ENCODE measurements at regions of chr10 and their contacts with region 1.

Region 1: DNA sequence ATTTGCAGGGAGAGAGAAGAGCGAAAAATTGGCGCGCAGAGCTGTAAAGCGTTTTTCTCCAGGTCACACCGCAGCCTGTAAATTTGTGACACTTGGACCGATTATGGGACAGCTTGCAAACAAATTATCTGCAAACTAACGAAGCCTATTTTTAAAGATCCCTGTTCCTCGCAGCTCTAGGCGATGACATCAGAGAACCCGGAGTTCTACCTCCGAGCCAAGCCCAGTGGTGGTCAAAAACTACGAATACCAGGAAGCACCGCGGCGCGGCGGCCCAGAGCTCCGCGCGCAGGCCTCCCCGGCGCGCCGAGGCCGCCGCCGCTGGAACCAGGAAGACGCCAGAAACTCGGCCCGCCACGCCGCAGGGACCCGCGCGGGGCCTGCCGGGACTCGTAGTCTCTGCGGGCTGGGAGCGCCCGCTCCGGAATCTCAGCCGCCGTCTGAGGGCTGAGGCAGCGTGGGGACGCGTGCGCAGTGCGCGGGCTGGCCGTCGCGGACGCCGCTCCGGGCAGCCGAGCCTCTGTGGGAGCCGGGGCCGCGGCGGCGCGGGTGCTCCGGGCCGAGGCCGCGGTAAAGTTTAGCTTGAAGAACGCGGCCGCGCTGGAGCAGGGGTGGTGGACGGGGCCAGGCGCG is at the start of gene PLEKHA1:
- DNase-seq: peak; percentile 95
- ATAC-seq: peak; percentile 85
- H3K4me3 ChIP-seq: peak within 1 kb of the TSS; percentile 45 to 84 (median 76)
- H3K4me3 Mint-ChIP-seq: peak within 1 kb of the TSS; percentile 92
- H3K27ac ChIP-seq: peak within 1 kb of the TSS; percentile 88 to 97
- H3K27ac Mint-ChIP-seq: peak within 1 kb of the TSS; percentile 98
- H3K4me1 ChIP-seq: peaks cover 13 to 17% of the 10 kb centered on the region in 2 donors
- H3K4me1 Mint-ChIP-seq: peaks cover 28% of the 10 kb centered on the region
- H3K27me3 ChIP-seq: peaks cover 0 to 31% (median 20%) of the 10 kb centered on the region in 4 experiments
- H3K27me3 Mint-ChIP-seq: peaks cover 26% of the 10 kb centered on the region
- CTCF ChIP-seq: no peak
- total RNA-seq, gene PLEKHA1: 28.5 and 34.0 TPM in 2 replicates

Region 2: GRCh38 chr10:121927841-121928527 is 446.4 kb before region 1 on chr10 and contains the start of gene ATE1:
- CTCF ChIA-PET with region 1: no interaction called
- POLR2A ChIA-PET with region 1: no interaction called
- intact Hi-C with region 1: loop called (anchors 2 kb)
- DNase-seq: peak; percentile 89
- ATAC-seq: peak; percentile 93
- H3K4me3 ChIP-seq: peak within 1 kb of the TSS; percentile 71 to 99 (median 82)
- H3K4me3 Mint-ChIP-seq: peak within 1 kb of the TSS; percentile 96
- H3K27ac ChIP-seq: peak within 1 kb of the TSS; percentile 96 to 97
- H3K27ac Mint-ChIP-seq: peak within 1 kb of the TSS; percentile 94
- H3K4me1 ChIP-seq: peaks cover 10 to 16% of the 10 kb centered on the region in 2 donors
- H3K4me1 Mint-ChIP-seq: peaks cover 19% of the 10 kb centered on the region
- H3K27me3 ChIP-seq: no peaks in the 10 kb centered on the region
- H3K27me3 Mint-ChIP-seq: no peaks in the 10 kb centered on the region
- CTCF ChIP-seq: no peak
- total RNA-seq, gene ATE1: 32.0 and 40.3 TPM in 2 replicates

Region 3: GRCh38 chr10:122342293-122343134 is 31.8 kb before region 1 on chr10:
- CTCF ChIA-PET with region 1: interaction called, 11 read pairs
- POLR2A ChIA-PET with region 1: interaction called, 10 read pairs
- intact Hi-C with region 1: no loop called
- DNase-seq: peak; percentile 65
- ATAC-seq: peak; percentile 47
- H3K4me3 ChIP-seq: no peak overlapping the region
- H3K4me3 Mint-ChIP-seq: no peak overlapping the region
- H3K27ac ChIP-seq: no peak overlapping the region
- H3K27ac Mint-ChIP-seq: no peak overlapping the region
- H3K4me1 ChIP-seq: peaks cover 8 to 9% of the 10 kb centered on the region in 2 donors
- H3K4me1 Mint-ChIP-seq: peaks cover 11% of the 10 kb centered on the region
- H3K27me3 ChIP-seq: peaks cover 0 to 3% (median 1%) of the 10 kb centered on the region in 4 experiments
- H3K27me3 Mint-ChIP-seq: peaks cover 20% of the 10 kb centered on the region
- CTCF ChIP-seq: peak; percentile 82

Region 4: DNA sequence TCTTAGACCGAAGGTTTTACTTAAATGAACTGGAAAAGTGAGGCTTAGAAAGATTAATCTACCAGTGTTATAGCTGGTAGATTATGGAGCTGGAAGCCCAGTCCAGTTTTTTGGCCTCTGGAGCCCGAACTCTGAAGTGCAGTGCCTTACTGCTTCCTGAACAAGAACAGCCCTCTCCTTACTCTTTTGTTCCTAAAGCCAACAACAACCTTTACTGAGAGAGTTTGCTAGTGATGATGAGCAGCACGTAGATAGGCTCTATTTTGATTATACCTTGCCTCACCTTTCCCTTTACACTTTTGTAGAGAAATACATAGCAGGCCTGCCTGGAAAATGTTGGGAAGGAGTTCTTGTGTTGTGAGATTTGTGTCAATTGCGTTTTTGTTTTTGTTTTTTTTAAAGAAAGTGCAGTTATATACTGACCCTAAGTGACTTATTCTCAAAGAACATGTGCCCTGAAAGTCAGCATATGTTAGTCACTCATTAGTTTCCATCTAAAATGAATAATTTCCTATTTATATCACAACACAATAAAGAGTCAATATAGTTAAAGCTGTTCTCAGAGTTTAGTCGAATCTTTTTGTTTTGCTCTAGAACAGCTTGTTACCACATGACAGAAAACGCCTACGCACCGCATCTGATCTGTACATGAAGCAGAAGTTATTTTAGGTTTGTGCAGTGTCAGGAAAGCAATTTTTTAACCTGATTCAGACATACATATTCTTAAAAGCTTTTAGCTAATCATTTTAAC is 33.2 kb after region 1 on chr10:
- CTCF ChIA-PET with region 1: no interaction called
- POLR2A ChIA-PET with region 1: no interaction called
- intact Hi-C with region 1: no loop called
- DNase-seq: peak; percentile 14
- ATAC-seq: no peak
- H3K4me3 ChIP-seq: no peak overlapping the region
- H3K4me3 Mint-ChIP-seq: no peak overlapping the region
- H3K27ac ChIP-seq: no peak overlapping the region
- H3K27ac Mint-ChIP-seq: no peak overlapping the region
- H3K4me1 ChIP-seq: no peaks in the 10 kb centered on the region
- H3K4me1 Mint-ChIP-seq: peaks cover 16% of the 10 kb centered on the region
- H3K27me3 ChIP-seq: no peaks in the 10 kb centered on the region
- H3K27me3 Mint-ChIP-seq: no peaks in the 10 kb centered on the region
- CTCF ChIP-seq: no peak

Region 5: DNA sequence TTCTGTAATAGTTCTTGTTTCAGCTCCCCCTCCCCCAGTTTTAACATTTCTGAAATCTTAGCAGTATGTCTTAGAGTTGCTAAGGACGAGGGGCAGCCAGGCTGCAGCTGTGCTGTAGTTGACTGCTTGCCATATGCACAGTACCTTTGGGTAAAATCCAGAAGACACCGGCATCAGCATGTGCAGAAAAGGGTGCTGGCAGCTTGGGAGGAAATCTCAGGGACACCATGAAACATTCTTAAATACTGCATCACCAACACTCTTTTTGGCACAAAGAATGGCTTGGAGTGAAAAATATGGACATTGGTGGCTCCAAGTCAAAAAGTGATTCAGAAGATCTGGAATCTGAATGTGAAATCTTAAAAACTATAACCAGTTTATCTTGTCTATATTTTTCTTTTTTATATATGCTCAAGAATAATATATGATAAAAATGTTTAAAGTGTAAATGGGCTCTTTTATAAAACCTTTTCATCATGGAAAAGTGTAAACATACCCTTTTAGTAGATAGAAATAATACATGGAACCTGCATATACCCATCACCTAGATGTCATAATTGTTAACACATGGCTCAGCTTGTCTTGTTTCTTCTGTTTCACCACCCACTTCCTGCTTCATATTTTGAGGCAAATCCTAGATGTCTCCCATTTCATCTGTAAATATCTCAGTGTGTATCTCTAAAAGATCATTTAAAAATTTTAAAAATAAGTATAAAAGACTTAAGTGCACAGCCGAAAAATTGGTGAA is 45.7 kb after region 1 on chr10:
- CTCF ChIA-PET with region 1: interaction called, 3 read pairs
- POLR2A ChIA-PET with region 1: no interaction called
- intact Hi-C with region 1: loop called (anchors 5 kb)
- DNase-seq: no peak
- ATAC-seq: no peak
- H3K4me3 ChIP-seq: no peak overlapping the region
- H3K4me3 Mint-ChIP-seq: no peak overlapping the region
- H3K27ac ChIP-seq: peak overlapping the region; percentile 7 to 42
- H3K27ac Mint-ChIP-seq: no peak overlapping the region
- H3K4me1 ChIP-seq: peaks cover 34 to 73% of the 10 kb centered on the region in 2 donors
- H3K4me1 Mint-ChIP-seq: peaks cover 72% of the 10 kb centered on the region
- H3K27me3 ChIP-seq: no peaks in the 10 kb centered on the region
- H3K27me3 Mint-ChIP-seq: no peaks in the 10 kb centered on the region
- CTCF ChIP-seq: no peak

Region 6: DNA sequence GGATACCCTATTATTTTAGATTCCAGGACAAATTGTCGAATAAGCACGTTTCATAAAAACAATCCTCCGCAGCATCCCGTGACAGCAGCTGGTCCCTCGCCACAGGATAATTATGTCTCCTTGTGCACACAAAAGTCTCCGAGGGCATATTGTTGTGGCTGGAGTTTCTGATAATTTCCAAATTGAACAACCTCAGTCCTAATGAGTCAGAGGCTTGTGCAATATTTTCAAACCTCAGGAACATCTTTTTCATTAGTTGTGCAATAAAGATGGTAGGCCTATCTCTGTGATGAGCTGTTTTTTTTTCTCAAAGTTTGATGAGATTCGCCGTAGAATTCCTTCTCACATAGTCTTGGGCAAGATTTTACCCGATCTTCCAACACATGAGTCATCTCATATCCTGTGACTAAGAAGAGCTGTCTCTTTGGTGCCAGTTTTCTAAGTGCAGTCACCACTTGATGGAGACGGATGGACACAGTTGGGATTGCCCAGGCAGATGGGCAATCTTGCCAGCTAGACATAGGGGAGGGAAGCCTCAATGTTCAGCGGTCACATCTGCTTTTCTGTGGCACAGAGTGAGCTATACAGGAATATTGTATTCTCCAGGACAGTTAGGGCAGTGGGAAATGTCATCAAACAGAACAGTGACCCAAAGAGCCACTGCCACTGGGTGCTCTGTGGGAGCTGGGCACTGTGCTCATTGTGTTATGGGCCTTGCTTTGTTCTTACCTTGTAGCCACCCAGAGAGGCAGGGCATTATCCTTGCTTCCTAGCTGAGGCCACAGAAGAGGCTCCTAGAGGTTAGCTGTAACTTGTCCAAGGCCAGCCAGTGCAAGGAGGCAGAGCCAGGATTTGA is 94.8 kb after region 1 on chr10:
- CTCF ChIA-PET with region 1: no interaction called
- POLR2A ChIA-PET with region 1: no interaction called
- intact Hi-C with region 1: no loop called
- DNase-seq: no peak
- ATAC-seq: no peak
- H3K4me3 ChIP-seq: no peak overlapping the region
- H3K4me3 Mint-ChIP-seq: no peak overlapping the region
- H3K27ac ChIP-seq: no peak overlapping the region
- H3K27ac Mint-ChIP-seq: no peak overlapping the region
- H3K4me1 ChIP-seq: no peaks in the 10 kb centered on the region
- H3K4me1 Mint-ChIP-seq: no peaks in the 10 kb centered on the region
- H3K27me3 ChIP-seq: peaks cover 0 to 10% (median 1%) of the 10 kb centered on the region in 4 experiments
- H3K27me3 Mint-ChIP-seq: peaks cover 36% of the 10 kb centered on the region
- CTCF ChIP-seq: no peak

Region 7: DNA sequence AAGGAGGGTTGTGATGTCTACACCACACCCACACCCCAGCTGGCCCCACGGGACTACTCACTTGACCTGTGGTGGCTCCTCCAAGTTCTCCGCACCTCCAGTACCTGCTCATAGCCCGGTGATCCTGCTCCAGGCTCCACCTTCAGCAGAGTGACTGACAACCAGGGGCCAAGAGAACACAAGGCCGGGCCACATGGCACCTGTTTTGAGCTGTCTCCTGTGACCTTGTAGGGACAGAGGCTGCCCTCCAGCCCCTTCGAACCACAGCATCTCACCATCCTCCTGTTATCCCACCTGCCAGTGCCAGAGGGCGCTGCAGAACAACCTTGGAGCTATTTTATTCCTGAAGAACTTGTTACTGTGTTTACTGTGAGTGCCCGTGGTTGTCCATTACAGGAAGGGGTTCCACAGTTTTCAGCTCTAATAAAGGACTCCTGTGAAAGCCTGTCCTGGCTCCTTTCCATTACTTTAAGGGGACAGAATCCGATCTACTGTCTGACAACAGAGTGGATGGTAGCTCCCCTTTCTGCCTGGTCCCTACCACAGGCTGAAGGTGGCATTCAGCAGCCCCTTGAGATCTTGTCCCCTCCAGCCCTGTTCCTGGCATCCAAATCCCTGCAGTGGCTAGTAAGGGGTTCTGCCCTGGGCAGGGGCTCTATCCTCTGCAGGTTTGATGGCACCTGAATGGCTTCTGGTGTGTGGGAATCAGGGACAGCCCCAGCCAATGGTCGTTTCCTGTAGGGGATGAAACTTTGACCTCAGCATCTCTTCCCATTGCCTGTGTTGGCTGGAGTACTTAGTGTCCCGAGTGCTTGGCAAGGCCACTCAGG is 274.5 kb after region 1 on chr10:
- CTCF ChIA-PET with region 1: no interaction called
- POLR2A ChIA-PET with region 1: no interaction called
- intact Hi-C with region 1: no loop called
- DNase-seq: peak; percentile 8
- ATAC-seq: no peak
- H3K4me3 ChIP-seq: no peak overlapping the region
- H3K4me3 Mint-ChIP-seq: no peak overlapping the region
- H3K27ac ChIP-seq: no peak overlapping the region
- H3K27ac Mint-ChIP-seq: no peak overlapping the region
- H3K4me1 ChIP-seq: no peaks in the 10 kb centered on the region
- H3K4me1 Mint-ChIP-seq: no peaks in the 10 kb centered on the region
- H3K27me3 ChIP-seq: no peaks in the 10 kb centered on the region
- H3K27me3 Mint-ChIP-seq: peaks cover 19% of the 10 kb centered on the region
- CTCF ChIP-seq: peak; percentile 33

Region 8: GRCh38 chr10:122879339-122880273 is 505.3 kb after region 1 on chr10 and contains the start of gene FAM24B:
- CTCF ChIA-PET with region 1: no interaction called
- POLR2A ChIA-PET with region 1: no interaction called
- intact Hi-C with region 1: loop called (anchors 1 kb)
- DNase-seq: peak; percentile 96
- ATAC-seq: peak; percentile 84
- H3K4me3 ChIP-seq: peak within 1 kb of the TSS; percentile 49 to 83 (median 64)
- H3K4me3 Mint-ChIP-seq: peak within 1 kb of the TSS; percentile 86
- H3K27ac ChIP-seq: peak within 1 kb of the TSS; percentile 62 to 86
- H3K27ac Mint-ChIP-seq: peak within 1 kb of the TSS; percentile 92
- H3K4me1 ChIP-seq: peaks cover 12 to 17% of the 10 kb centered on the region in 2 donors
- H3K4me1 Mint-ChIP-seq: peaks cover 39% of the 10 kb centered on the region
- H3K27me3 ChIP-seq: no peaks in the 10 kb centered on the region
- H3K27me3 Mint-ChIP-seq: no peaks in the 10 kb centered on the region
- CTCF ChIP-seq: no peak
- total RNA-seq, gene FAM24B: 11.7 and 12.5 TPM in 2 replicates

Region 9: DNA sequence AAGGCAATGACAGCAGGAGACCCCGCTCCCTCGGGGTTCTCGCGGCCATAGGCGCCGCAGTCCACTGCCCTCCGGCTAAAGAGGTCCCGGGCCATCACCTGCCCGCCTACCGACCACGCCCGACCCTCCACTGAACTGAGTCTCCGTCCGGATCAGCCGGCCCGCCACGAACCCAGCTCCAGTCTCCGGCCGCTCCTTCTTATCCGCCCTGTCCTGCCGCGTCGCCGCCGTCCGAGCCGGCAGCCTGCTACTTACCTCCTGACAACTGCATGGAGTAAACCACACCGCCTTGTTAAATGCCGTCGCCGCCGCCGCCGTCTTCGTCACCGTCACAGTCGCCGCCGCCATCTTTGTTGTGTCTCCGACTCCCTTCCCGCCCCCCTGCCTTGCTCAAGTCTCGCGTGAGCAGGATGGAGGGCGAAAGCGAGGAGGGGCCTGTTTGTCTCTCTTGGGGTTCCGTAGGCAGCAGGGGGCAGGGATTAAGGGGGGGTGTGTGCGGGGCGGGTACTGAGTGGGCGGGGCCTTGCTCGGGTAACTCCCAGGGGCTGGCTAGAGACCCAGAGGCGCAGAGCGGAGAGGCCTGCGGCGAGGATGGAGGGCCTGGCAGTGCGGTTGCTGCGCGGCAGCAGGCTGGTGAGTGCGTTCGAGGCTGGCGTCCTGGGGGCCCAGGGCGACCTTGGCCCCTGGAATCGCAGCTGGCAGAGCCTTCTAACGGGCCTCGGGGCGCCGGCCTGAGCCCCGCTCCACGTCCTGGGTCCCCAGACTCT is 634.3 kb after region 1 on chr10 and contains the starts of genes ACADSB and IKZF5:
- CTCF ChIA-PET with region 1: no interaction called
- POLR2A ChIA-PET with region 1: no interaction called
- intact Hi-C with region 1: loop called (anchors 1 kb)
- DNase-seq: peak; percentile 97
- ATAC-seq: peak; percentile 93
- H3K4me3 ChIP-seq: peak within 1 kb of the TSS; percentile 63 to 100 (median 95)
- H3K4me3 Mint-ChIP-seq: peak within 1 kb of the TSS; percentile 98
- H3K27ac ChIP-seq: peak within 1 kb of the TSS; percentile 92 to 98
- H3K27ac Mint-ChIP-seq: peak within 1 kb of the TSS; percentile 98
- H3K4me1 ChIP-seq: peaks cover 22 to 25% of the 10 kb centered on the region in 2 donors
- H3K4me1 Mint-ChIP-seq: peaks cover 48% of the 10 kb centered on the region
- H3K27me3 ChIP-seq: no peaks in the 10 kb centered on the region
- H3K27me3 Mint-ChIP-seq: no peaks in the 10 kb centered on the region
- CTCF ChIP-seq: no peak
- total RNA-seq, gene ACADSB: 27.8 and 27.9 TPM in 2 replicates
- total RNA-seq, gene IKZF5: 24.0 and 24.6 TPM in 2 replicates